Natural killer cell (primary cell): ENCODE measurements at regions of chr15 and their contacts with region 1.

Region 1: DNA sequence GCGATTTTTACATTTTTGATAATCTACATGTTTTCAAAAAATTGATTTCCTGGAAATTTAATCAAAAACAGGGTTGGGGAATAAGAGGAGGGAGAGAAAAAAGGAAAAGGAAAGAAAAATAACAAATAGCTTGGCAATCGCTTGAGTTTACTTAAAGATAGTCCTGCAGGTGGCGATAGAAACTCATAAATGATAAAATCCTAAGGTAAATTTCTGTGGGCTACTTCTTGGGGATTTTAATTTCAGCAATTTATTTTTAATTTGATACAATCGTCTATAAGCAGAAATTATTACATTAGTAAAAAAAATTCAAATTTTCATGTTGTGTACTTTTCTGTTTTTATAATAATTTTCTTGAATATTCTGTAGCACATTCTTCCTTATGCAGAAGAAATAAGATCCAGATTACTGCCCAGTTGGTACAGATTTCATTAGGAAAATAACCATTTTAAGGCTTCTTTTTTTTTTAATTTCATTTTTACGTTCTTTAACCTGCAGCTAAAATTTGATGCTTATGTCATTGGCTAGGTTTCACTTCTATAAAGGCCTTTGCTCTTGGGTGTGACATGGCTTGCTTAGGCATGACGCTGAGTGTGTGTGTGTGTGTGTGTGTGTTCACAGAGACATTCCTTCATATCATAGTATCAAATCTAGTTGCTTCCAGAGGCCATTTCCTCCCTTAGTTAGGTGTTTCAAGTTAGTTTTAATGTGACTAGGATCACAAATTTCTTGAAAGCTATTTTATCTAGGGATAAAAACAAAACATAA is 181.8 kb downstream of the MCTP2 start:
- DNase-seq: peak in 1 of 2 donors; percentile 10
- ATAC-seq: no peak
- H3K4me3 ChIP-seq: no peak overlapping the region
- H3K4me3 Mint-ChIP-seq: no peak overlapping the region
- H3K27ac ChIP-seq: no peak overlapping the region
- H3K27ac Mint-ChIP-seq: peak overlapping the region; percentile 5 to 35
- H3K4me1 ChIP-seq: no peaks in the 10 kb centered on the region
- H3K4me1 Mint-ChIP-seq: peaks cover 17 to 26% of the 10 kb centered on the region in 2 donors
- H3K27me3 ChIP-seq: no peaks in the 10 kb centered on the region
- H3K27me3 Mint-ChIP-seq: no peaks in the 10 kb centered on the region
- CTCF ChIP-seq: peak; percentile 56

Region 2: GRCh38 chr15:94212291-94212690 is 200.9 kb before region 1 on chr15:
- intact Hi-C with region 1: no loop called
- DNase-seq: no peak
- ATAC-seq: no peak
- H3K4me3 ChIP-seq: no peak overlapping the region
- H3K4me3 Mint-ChIP-seq: no peak overlapping the region
- H3K27ac ChIP-seq: no peak overlapping the region
- H3K27ac Mint-ChIP-seq: no peak overlapping the region
- H3K4me1 ChIP-seq: no peaks in the 10 kb centered on the region
- H3K4me1 Mint-ChIP-seq: peaks cover 6 to 18% of the 10 kb centered on the region in 2 donors
- H3K27me3 ChIP-seq: no peaks in the 10 kb centered on the region
- H3K27me3 Mint-ChIP-seq: peaks cover 0 to 8% of the 10 kb centered on the region in 2 donors
- CTCF ChIP-seq: no peak

Region 3: GRCh38 chr15:94387849-94388441 is 25.2 kb before region 1 on chr15:
- intact Hi-C with region 1: no loop called
- DNase-seq: peak in 1 of 2 donors; percentile 8
- ATAC-seq: peak in 2 of 3 donors; percentile 59 to 79
- H3K4me3 ChIP-seq: no peak overlapping the region
- H3K4me3 Mint-ChIP-seq: peak overlapping the region; percentile 61
- H3K27ac ChIP-seq: peak overlapping the region; percentile 31
- H3K27ac Mint-ChIP-seq: peak overlapping the region; percentile 80 to 84
- H3K4me1 ChIP-seq: peaks cover 10% of the 10 kb centered on the region
- H3K4me1 Mint-ChIP-seq: peaks cover 34 to 40% of the 10 kb centered on the region in 2 donors
- H3K27me3 ChIP-seq: no peaks in the 10 kb centered on the region
- H3K27me3 Mint-ChIP-seq: no peaks in the 10 kb centered on the region
- CTCF ChIP-seq: no peak

Region 4: DNA sequence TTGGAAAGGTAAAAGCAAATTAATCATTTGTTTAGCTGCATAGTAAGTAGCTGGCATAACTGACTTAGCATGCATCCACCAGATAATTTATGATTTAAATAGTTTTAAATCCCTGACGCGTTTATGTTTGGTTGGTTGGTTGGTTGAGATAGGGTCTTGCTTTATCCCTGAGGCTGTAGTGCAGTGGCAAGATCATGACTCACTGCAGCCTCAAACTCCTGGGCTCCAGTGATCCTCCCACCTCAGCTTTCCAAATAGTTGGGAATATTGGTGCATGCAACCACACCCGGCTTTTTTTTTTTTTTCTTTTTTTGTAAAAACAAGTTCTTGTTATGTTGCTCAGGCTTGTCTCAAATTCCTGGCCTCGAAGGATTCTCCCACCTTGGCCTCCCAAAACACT is 81.6 kb after region 1 on chr15:
- intact Hi-C with region 1: no loop called
- DNase-seq: no peak
- ATAC-seq: no peak
- H3K4me3 ChIP-seq: no peak overlapping the region
- H3K4me3 Mint-ChIP-seq: no peak overlapping the region
- H3K27ac ChIP-seq: no peak overlapping the region
- H3K27ac Mint-ChIP-seq: no peak overlapping the region
- H3K4me1 ChIP-seq: no peaks in the 10 kb centered on the region
- H3K4me1 Mint-ChIP-seq: no peaks in the 10 kb centered on the region
- H3K27me3 ChIP-seq: no peaks in the 10 kb centered on the region
- H3K27me3 Mint-ChIP-seq: peaks cover 7 to 40% of the 10 kb centered on the region in 2 donors
- CTCF ChIP-seq: no peak

Region 5: DNA sequence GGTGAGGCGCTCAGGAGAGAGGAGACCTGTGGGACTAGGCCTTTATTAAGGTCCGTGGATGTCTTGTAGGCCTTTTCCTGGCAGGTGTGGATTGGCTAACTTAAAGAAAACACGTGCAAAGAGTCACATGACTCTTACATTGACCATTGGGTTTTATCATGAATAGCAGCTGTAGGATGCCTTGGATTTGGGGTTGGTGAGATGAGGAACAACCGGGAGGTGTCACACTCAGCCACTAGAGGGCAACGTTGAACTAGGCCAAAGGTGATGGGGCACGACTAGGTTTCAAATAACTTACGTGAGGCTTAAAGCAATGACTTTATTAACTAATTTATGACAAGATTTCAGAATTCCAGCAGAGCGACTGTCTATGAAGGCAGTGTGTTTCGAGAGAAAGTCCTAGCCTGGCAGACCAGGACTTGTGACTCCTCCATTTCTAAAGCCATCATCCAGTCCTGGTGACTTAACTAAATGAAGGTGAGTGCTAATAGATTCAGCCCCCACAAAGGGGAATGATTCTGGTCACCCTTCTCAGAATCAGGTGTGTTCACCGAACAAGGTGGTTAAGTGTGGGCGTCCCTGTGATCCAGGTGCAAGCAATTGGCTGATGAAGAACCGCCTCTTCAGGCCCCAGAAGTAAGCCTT is 163.8 kb after region 1 on chr15:
- intact Hi-C with region 1: loop called (anchors 10 kb)
- DNase-seq: peak in 1 of 2 donors; percentile 58
- ATAC-seq: peak in 2 of 3 donors; percentile 64 to 77
- H3K4me3 ChIP-seq: no peak overlapping the region
- H3K4me3 Mint-ChIP-seq: no peak overlapping the region
- H3K27ac ChIP-seq: no peak overlapping the region
- H3K27ac Mint-ChIP-seq: no peak overlapping the region
- H3K4me1 ChIP-seq: peaks cover 2% of the 10 kb centered on the region
- H3K4me1 Mint-ChIP-seq: peaks cover 1 to 10% of the 10 kb centered on the region in 2 donors
- H3K27me3 ChIP-seq: peaks cover 12% of the 10 kb centered on the region
- H3K27me3 Mint-ChIP-seq: peaks cover 46 to 70% of the 10 kb centered on the region in 2 donors
- CTCF ChIP-seq: peak; percentile 59